ENCODE measurements at regions of chr18 and their contacts with region 1.

Region 1: GRCh38 chr18:267688-268552 is at the start of gene THOC1:
- DNase-seq: peak; percentile 92
- H3K4me3 Mint-ChIP-seq: peak within 1 kb of the TSS; percentile 93
- H3K27ac Mint-ChIP-seq: peak within 1 kb of the TSS; percentile 98
- H3K4me1 Mint-ChIP-seq: peaks cover 30% of the 10 kb centered on the region
- H3K27me3 Mint-ChIP-seq: no peaks in the 10 kb centered on the region
- total RNA-seq, gene THOC1: 69.9 and 76.8 TPM in 2 replicates

Region 2: DNA sequence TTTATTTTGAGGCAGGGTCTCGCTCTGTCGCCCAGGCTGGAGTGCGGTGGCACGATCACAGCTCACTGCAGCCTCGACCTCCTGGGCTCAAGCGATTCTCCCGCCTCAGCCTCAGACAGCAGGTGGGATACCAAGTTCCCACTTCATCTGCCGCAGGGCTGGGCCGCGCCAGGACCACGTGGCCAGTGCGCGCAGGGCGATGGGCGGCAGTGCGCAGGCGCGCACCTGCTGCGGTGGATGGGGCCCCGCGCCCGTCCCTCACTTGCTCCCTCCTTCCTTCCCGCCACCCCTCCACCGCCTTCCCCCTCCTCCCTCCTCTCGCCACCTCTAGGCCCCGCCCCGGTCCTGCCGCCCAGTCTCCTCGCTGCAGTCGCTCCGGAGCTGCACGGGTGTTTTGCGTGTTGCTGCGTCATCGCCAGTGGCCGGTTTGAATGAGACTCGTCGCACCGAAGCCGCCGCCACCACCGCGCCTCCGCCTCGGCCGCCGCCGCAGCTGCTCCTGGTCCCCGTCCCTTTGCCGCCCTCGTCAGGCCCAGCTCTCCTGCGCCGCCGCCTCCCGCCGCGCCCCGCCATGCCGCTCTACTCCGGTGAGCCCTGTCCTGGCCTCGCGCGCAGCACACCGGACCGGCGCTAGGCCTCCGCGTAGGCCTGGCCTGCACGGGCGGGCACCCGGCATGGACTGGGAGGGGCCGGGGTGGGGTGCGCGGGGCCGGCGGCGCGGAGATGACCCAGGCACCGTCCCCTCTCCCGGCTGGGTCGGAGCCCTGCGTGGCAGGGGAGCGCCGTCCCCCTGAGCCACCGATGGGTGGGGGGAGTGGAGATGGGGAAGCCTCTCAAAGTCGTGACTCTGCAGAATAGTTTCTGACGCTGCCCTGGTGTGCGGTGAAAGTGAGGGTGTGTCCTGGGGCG is 109.5 kb before region 1 on chr18 and contains the start of gene USP14:
- intact Hi-C with region 1: loop called (anchors 1 kb)
- DNase-seq: peak; percentile 94
- H3K4me3 Mint-ChIP-seq: peak within 1 kb of the TSS; percentile 98
- H3K27ac Mint-ChIP-seq: peak within 1 kb of the TSS; percentile 95
- H3K4me1 Mint-ChIP-seq: peaks cover 29% of the 10 kb centered on the region
- H3K27me3 Mint-ChIP-seq: peaks cover 5% of the 10 kb centered on the region
- total RNA-seq, gene USP14: 95.3 and 99.6 TPM in 2 replicates

Region 3: GRCh38 chr18:286515-287310 is 18.8 kb after region 1 on chr18:
- intact Hi-C with region 1: loop called (anchors 1 kb)
- DNase-seq: no peak
- H3K4me3 Mint-ChIP-seq: peak overlapping the region; percentile 42
- H3K27ac Mint-ChIP-seq: peak overlapping the region; percentile 81
- H3K4me1 Mint-ChIP-seq: peaks cover 13% of the 10 kb centered on the region
- H3K27me3 Mint-ChIP-seq: peaks cover 9% of the 10 kb centered on the region

Region 4: GRCh38 chr18:331221-331821 is 63.4 kb after region 1 on chr18:
- intact Hi-C with region 1: no loop called
- DNase-seq: no peak
- H3K4me3 Mint-ChIP-seq: no peak overlapping the region
- H3K27ac Mint-ChIP-seq: no peak overlapping the region
- H3K4me1 Mint-ChIP-seq: no peaks in the 10 kb centered on the region
- H3K27me3 Mint-ChIP-seq: peaks cover 4% of the 10 kb centered on the region

Region 5: DNA sequence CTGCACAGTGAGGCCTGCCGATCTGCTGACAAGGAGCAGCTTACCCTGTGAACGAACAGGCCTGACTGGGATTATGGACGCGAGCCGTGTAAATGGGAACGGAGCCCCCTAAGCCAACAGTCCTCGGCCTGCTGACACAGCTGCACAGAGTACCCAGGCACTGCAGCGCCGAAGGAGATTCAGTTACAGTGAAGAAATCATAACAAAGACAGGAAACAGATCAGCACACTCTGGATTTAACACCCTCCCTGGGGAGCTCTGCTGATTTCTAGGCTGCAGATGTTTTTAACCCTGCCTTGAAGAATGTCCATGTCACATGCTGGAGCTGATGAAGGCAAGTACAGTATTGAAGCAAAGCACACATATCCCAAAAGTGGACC is 189.2 kb after region 1 on chr18:
- intact Hi-C with region 1: no loop called
- DNase-seq: no peak
- H3K4me3 Mint-ChIP-seq: no peak overlapping the region
- H3K27ac Mint-ChIP-seq: no peak overlapping the region
- H3K4me1 Mint-ChIP-seq: no peaks in the 10 kb centered on the region
- H3K27me3 Mint-ChIP-seq: peaks cover 1% of the 10 kb centered on the region

Region 6: DNA sequence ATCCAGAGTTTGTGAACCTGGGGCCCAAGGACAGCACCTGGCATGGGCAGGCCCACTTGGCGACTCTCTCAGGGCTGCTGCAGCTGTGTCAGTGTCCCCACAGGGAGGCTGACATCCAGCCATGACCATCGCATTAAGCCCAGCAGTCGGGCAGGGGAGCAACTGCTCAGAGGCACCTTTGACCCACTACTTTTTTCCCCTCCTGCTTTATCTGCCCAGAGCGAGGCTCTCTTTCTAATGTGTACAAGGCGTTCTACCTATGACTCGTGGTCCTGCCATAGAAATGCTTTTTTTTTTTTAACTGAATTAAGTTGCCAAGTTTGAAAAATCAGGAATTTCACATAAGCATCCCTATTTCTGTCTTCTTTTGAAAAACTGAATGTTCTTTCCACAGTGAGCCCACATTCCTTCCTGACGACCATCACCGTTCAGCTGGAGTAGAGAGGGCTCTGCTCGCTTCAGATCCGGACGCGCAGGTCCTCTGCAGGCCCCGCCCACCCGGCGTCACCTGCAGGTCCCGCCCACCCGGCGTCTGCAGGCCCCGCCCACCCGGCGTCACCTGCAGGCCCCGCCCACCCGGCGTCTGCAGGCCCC is 328.5 kb after region 1 on chr18:
- intact Hi-C with region 1: loop called (anchors 1 kb)
- DNase-seq: no peak
- H3K4me3 Mint-ChIP-seq: no peak overlapping the region
- H3K27ac Mint-ChIP-seq: no peak overlapping the region
- H3K4me1 Mint-ChIP-seq: peaks cover 14% of the 10 kb centered on the region
- H3K27me3 Mint-ChIP-seq: peaks cover 20% of the 10 kb centered on the region

Region 7: DNA sequence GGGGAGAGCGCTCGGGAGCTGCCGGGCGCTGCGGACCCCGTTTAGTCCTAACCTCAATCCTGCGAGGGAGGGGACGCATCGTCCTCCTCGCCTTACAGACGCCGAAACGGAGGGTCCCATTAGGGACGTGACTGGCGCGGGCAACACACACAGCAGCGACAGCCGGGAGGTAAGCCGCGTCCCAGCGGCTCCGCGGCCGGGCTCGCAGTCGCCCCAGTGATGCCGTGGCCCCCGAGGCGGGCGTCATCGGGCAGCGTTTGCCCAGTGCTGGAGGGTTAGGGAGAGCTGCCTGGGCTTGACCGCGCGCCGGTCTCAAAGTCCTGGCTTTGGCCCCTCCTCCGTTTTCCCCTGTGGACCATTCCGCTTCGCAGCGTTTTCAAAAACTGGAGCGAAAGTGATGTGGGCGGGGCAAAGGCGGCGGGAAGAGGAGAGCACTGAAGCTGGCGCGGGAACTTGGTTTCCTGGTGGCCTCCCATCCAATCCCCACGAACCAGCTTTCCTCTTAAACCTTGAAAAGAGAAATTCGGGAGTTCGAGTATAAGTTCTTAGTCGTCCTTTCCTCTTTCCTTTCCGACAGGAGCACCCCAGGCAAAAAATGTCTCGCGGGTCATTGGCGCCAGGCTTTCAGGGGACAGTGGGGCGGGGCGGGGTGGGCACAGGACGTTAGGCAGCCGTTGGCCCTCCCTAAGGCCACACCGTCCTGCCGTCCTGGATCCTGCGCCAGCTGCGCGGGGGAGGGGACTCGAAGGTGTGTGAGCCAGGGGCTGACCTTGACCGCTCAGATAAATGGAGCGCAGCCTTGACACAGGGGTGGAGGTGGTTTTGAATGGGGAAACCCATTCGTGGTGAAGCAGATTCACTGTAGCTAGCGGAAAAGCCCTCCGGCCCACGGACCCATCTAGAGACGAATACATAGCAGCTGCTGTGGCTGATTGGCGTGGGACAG is 390.4 kb after region 1 on chr18:
- intact Hi-C with region 1: loop called (anchors 1 kb)
- DNase-seq: peak; percentile 74
- H3K4me3 Mint-ChIP-seq: peak overlapping the region; percentile 96
- H3K27ac Mint-ChIP-seq: peak overlapping the region; percentile 93
- H3K4me1 Mint-ChIP-seq: peaks cover 39% of the 10 kb centered on the region
- H3K27me3 Mint-ChIP-seq: no peaks in the 10 kb centered on the region

Region 8: DNA sequence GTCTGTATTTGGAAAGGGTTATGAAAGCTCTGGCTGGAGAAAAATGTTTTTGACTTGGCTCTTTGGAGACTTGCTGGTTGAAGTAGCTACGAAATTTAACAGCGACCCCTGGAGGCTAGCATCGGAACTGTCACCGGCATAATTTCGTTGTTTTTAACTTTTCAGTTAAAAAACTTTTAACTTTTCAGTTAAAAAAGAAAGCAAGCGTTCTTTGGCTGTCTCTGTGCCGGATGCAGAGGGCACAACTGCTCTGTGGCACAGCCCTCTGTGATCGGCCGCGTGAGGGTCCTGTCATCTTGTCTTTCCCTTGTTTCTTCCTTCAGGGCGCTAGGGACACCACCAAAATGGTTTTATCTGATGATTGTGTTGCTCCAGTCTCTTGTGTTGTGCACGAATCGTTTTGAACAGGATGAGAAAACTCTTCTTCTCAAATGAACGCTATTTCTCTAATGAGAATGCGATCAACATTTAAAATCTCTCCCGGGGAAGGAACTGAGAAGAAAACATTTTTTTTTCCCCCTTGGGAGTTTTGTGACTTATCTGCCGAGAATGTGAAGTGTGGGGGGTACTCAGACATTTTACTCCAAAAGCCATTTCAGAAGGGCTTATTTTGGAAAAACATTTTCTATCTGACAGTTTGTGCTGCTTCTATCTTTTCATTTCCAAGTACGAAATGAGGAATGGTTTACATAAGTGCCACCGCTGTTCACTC is 693.9 kb after region 1 on chr18:
- intact Hi-C with region 1: no loop called
- DNase-seq: peak; percentile 5
- H3K4me3 Mint-ChIP-seq: no peak overlapping the region
- H3K27ac Mint-ChIP-seq: no peak overlapping the region
- H3K4me1 Mint-ChIP-seq: no peaks in the 10 kb centered on the region
- H3K27me3 Mint-ChIP-seq: peaks cover 11% of the 10 kb centered on the region